Heart right ventricle (tissue), 16 donors: ENCODE measurements at regions of chr2 and their contacts with region 1.

Region 1: GRCh38 chr2:101151141-101151858 is at the start of gene TBC1D8:
- DNase-seq: peak; percentile 93 to 95
- ATAC-seq: peak; percentile 89 to 94 (median 92)
- H3K4me3 ChIP-seq: peak within 1 kb of the TSS; percentile 54 to 99 (median 82)
- H3K27ac ChIP-seq: peak within 1 kb of the TSS; percentile 80 to 96 (median 89)
- H3K4me1 ChIP-seq: peaks cover 7 to 75% (median 64%) of the 10 kb centered on the region in 9 donors
- H3K27me3 ChIP-seq: no peaks in the 10 kb centered on the region
- CTCF ChIP-seq: no peak
- total RNA-seq, gene TBC1D8: 42.6 to 69.5 (median 55.8) TPM

Region 2: GRCh38 chr2:100610381-100610831 is 540.9 kb before region 1 on chr2:
- intact Hi-C with region 1: loop called in 1 of 10 experiments (anchors 10 kb)
- DNase-seq: peak; percentile 59 to 66
- ATAC-seq: peak; percentile 61 to 85 (median 74)
- H3K4me3 ChIP-seq: no peak overlapping the region
- H3K27ac ChIP-seq: no peak overlapping the region
- H3K4me1 ChIP-seq: no peaks in the 10 kb centered on the region
- H3K27me3 ChIP-seq: no peaks in the 10 kb centered on the region
- CTCF ChIP-seq: peak; percentile 34 to 74 (median 65)

Region 3: GRCh38 chr2:100730346-100730745 is 421.0 kb before region 1 on chr2:
- intact Hi-C with region 1: no loop called
- DNase-seq: peak; percentile 58 to 61
- ATAC-seq: peak; percentile 69 to 90 (median 80)
- H3K4me3 ChIP-seq: no peak overlapping the region
- H3K27ac ChIP-seq: no peak overlapping the region
- H3K4me1 ChIP-seq: peaks cover 4 to 14% (median 11%) of the 10 kb centered on the region in 9 donors
- H3K27me3 ChIP-seq: no peaks in the 10 kb centered on the region
- CTCF ChIP-seq: peak; percentile 23 to 84 (median 71)

Region 4: GRCh38 chr2:101001691-101002561 is 149.4 kb before region 1 on chr2 and contains the start of gene RPL31:
- intact Hi-C with region 1: loop called in 1 of 10 experiments (anchors 2 kb)
- DNase-seq: peak; percentile 96 to 98
- ATAC-seq: peak; percentile 95 to 99 (median 98)
- H3K4me3 ChIP-seq: peak within 1 kb of the TSS; percentile 68 to 94 (median 82)
- H3K27ac ChIP-seq: peak within 1 kb of the TSS; percentile 37 to 93 (median 84)
- H3K4me1 ChIP-seq: peaks cover 4 to 41% (median 25%) of the 10 kb centered on the region in 9 donors
- H3K27me3 ChIP-seq: no peaks in the 10 kb centered on the region
- CTCF ChIP-seq: no peak
- total RNA-seq, gene RPL31: 610 to 902 (median 663) TPM

Region 5: GRCh38 chr2:101030863-101031554 is 120.3 kb before region 1 on chr2:
- intact Hi-C with region 1: loop called in 8 of 10 experiments (anchors 2 to 5 kb)
- DNase-seq: peak in 1 of 2 donors; percentile 38
- ATAC-seq: peak; percentile 56 to 95 (median 84)
- H3K4me3 ChIP-seq: no peak overlapping the region
- H3K27ac ChIP-seq: peak overlapping the region in 5 of 10 donors; percentile 9 to 51 (median 37)
- H3K4me1 ChIP-seq: peaks cover 0 to 15% (median 0%) of the 10 kb centered on the region in 9 donors
- H3K27me3 ChIP-seq: no peaks in the 10 kb centered on the region
- CTCF ChIP-seq: peak in 4 of 9 donors; percentile 7 to 38 (median 28)

Region 6: GRCh38 chr2:101047075-101047766 is 104.1 kb before region 1 on chr2:
- intact Hi-C with region 1: loop called in 1 of 10 experiments (anchors 5 kb)
- DNase-seq: no peak
- ATAC-seq: peak in 6 of 8 donors; percentile 26 to 63 (median 44)
- H3K4me3 ChIP-seq: no peak overlapping the region
- H3K27ac ChIP-seq: peak overlapping the region in 6 of 10 donors; percentile 2 to 59 (median 42)
- H3K4me1 ChIP-seq: peaks cover 0 to 35% (median 18%) of the 10 kb centered on the region in 9 donors
- H3K27me3 ChIP-seq: no peaks in the 10 kb centered on the region
- CTCF ChIP-seq: no peak

Region 7: GRCh38 chr2:101113396-101114267 is 37.7 kb before region 1 on chr2:
- intact Hi-C with region 1: loop called in 7 of 10 experiments (anchors 2 to 5 kb)
- DNase-seq: no peak
- ATAC-seq: peak in 1 of 8 donors; percentile 21
- H3K4me3 ChIP-seq: no peak overlapping the region
- H3K27ac ChIP-seq: peak overlapping the region; percentile 60 to 93 (median 84)
- H3K4me1 ChIP-seq: peaks cover 33 to 97% (median 71%) of the 10 kb centered on the region in 9 donors
- H3K27me3 ChIP-seq: no peaks in the 10 kb centered on the region
- CTCF ChIP-seq: no peak

Region 8: DNA sequence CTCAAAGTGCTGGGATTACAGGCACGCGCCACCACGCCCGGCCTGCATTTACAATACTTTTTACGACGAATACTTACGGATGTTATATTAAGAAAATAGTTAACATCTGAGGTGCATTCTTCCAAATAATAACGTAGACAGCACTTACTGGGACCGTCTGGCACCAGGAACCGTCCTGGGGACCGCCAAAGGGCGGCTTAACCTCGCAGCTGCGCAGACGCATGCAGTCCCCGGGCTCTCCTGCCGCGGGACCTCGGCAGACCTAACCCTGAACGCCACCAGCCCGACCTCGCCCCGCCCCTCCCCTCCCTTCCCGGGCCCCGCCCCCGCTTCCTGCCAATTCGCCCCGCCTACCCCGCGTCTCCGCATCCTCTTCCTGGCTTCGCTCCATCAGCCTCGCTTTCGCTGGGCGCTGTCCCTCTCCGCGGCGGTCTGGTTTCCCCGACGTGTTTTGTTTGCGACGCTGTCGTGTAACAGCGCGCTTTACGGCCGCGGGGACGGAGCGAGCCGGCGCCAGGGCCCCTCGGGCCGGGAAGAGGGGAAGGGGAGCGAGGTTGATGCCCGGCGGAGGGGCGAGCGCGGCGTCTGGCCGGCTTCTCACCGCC is 101.2 kb after region 1 on chr2 and contains the start of gene CNOT11:
- intact Hi-C with region 1: loop called in 1 of 10 experiments (anchors 5 kb)
- DNase-seq: peak; percentile 100
- ATAC-seq: peak; percentile 94 to 97 (median 96)
- H3K4me3 ChIP-seq: peak within 1 kb of the TSS; percentile 71 to 100 (median 95)
- H3K27ac ChIP-seq: peak within 1 kb of the TSS; percentile 67 to 99 (median 97)
- H3K4me1 ChIP-seq: peaks cover 2 to 42% (median 38%) of the 10 kb centered on the region in 9 donors
- H3K27me3 ChIP-seq: no peaks in the 10 kb centered on the region
- CTCF ChIP-seq: no peak
- total RNA-seq, gene CNOT11: 37.8 to 77.1 (median 45.8) TPM